Calu3 (cell line): ENCODE measurements at regions of chr10 and their contacts with region 1.

Region 1: DNA sequence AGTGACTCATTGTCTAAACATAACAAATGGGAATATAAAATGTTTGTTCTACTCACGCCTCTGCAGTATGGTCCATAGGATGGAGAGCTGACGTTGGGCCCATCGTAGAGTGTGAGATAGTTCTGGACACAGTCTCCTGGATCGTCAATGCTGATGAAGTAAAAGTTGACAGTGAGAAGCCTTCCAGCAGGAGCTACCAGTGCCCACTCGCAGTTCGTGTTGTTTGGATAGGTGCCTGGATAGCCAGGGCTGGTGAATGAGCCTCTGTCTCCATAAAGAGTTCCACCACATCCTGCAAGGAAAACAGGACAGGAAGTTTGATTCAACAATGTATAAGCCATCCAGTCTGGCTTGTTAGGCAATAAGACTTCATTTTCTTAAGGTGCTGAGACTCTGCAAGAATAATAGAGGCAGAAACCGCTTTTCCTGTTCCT is 79.6 kb downstream of the OR13A1 start:
- DNase-seq: peak; percentile 5
- H3K4me3 Mint-ChIP-seq: no peak overlapping the region
- H3K27ac Mint-ChIP-seq: no peak overlapping the region
- H3K4me1 Mint-ChIP-seq: peaks cover 10% of the 10 kb centered on the region
- H3K27me3 Mint-ChIP-seq: peaks cover 24% of the 10 kb centered on the region
- CTCF ChIP-seq: no peak

Region 2: GRCh38 chr10:45008524-45009161 is 227.2 kb before region 1 on chr10:
- CTCF ChIA-PET with region 1: no interaction called
- intact Hi-C with region 1: loop called (anchors 2 kb)
- DNase-seq: peak; percentile 53
- H3K4me3 Mint-ChIP-seq: no peak overlapping the region
- H3K27ac Mint-ChIP-seq: no peak overlapping the region
- H3K4me1 Mint-ChIP-seq: no peaks in the 10 kb centered on the region
- H3K27me3 Mint-ChIP-seq: peaks cover 12% of the 10 kb centered on the region
- CTCF ChIP-seq: peak; percentile 70

Region 3: DNA sequence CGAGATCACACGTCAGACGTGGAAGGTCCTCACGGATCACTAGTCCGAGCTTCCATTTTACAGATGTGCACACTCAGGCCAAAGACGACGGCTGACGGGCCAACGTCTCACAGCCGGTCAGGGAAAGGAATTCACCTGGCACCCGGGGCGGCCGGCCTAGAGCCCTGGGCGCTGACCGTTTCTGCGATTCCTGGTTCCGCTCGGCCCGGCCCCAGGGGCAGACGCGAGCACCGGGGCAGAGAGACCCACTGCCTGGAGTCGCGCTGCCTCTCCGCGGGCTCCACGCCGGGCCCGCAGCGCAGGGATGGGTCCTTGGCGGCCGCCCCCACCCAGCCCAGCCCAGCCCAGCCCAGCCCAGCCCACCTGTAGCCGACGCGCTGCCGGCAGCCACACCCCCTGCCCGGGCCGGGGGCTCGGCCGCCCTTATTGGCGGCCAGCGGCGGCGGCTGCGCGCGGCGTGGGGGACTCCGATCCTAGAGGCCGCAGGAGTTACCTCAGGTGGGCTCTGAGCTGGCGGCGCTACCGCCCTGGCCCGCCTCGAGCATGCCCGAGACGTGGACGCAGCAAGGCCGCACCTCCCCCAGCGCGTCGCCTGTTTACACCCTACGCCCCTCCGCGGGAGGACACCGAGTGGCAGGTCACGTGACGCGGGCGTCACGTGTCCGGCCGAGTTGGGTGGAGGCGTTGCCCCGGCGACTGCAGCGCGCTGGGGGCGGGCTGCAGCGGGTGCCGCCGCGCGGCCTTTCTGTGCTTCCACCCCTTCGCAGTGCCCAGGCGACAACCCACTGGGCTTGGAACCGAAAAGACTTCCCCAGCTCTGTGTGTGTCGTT is 358.7 kb after region 1 on chr10:
- CTCF ChIA-PET with region 1: no interaction called
- intact Hi-C with region 1: no loop called
- DNase-seq: peak; percentile 93
- H3K4me3 Mint-ChIP-seq: peak overlapping the region; percentile 79
- H3K27ac Mint-ChIP-seq: peak overlapping the region; percentile 63
- H3K4me1 Mint-ChIP-seq: peaks cover 12% of the 10 kb centered on the region
- H3K27me3 Mint-ChIP-seq: no peaks in the 10 kb centered on the region
- CTCF ChIP-seq: no peak

Region 4: DNA sequence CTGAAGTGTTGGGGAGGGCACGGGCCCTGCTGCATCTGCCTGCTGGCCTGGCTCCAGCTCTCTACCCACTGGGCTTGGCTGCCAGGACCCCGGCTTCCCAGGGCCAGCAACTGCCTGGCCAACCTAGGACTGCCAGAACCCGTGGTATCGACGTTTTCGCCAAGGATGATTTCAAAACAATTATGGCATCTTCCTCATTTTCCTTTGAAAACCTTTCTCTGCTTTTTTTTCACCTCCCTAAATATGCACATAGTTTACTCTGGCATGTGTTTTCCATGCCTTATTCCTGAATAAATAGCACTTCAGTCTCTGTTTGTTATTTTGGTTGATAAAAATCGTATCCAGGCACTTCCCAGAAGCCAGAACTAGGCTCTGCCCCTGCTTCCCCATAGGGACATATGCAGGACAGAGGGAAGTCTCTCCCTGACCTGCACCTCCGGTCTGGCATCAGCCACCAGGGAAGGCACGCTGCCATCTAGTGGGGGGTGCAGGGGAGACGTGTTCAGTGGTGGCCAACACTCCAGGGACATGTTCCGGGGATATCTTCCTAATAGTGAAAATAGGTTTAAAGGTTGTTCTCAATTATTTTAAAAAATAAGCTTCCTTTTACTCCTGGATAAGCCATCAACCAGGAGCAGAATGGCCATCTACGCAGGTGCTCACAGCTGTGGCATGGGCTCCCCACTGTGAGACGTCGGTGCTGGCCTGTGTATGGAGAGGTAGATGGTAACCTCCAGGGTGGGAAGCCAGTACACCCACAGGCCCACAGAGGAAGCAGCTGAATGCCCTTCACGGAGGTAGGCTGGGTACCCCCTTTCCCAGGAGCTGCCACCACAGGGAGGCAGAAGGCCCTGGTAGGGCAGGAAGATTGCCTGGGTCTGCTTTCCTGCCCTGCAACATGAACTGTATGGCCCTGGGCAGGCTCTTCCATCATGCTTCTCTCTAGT is 1020.3 kb after region 1 on chr10:
- CTCF ChIA-PET with region 1: no interaction called
- intact Hi-C with region 1: loop called (anchors 10 kb)
- DNase-seq: peak; percentile 98
- H3K4me3 Mint-ChIP-seq: no peak overlapping the region
- H3K27ac Mint-ChIP-seq: no peak overlapping the region
- H3K4me1 Mint-ChIP-seq: peaks cover 9% of the 10 kb centered on the region
- H3K27me3 Mint-ChIP-seq: peaks cover 72% of the 10 kb centered on the region
- CTCF ChIP-seq: peak; percentile 98